PC-3 (cell line): ENCODE measurements at regions of chr1 and their contacts with region 1.

Region 1: DNA sequence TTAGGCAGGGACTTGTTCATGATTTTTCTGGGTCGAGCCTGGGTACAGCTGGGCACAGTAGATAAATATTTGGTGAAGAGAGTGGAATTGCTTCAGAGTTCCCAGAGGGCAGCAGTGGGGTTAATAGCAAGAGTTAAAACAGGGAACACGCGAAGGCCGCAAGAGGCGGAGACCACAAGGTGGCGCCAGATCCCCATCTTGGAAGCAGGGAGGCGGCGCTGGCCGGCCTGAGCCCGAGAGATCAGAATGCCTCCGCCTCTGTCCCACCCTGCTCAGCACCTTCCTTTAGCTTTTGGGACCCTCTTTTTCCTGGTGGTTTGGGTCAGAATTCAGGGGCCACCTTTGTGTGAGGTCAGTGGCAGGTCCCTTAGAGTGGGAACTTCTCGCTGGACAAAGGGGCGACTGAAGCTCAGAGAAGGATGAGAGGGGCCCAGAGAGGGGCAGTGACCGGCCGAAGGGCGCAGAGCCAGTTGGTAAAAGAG is 6.5 kb upstream of the PADI2 start:
- DNase-seq: peak; percentile 90
- ATAC-seq: peak; percentile 83
- H3K4me3 ChIP-seq: no peak overlapping the region
- H3K27ac ChIP-seq: no peak overlapping the region; the same call in 1 of the 2 replicates
- H3K4me1 ChIP-seq: peaks cover 18% of the 10 kb centered on the region
- H3K27me3 ChIP-seq: no peaks in the 10 kb centered on the region
- CTCF ChIP-seq: peak; percentile 93

Region 2: GRCh38 chr1:17168091-17168876 is 42.5 kb after region 1 on chr1:
- CTCF ChIA-PET with region 1: no interaction called
- POLR2A ChIA-PET with region 1: no interaction called
- intact Hi-C with region 1: loop called (anchors 1 kb)
- DNase-seq: peak; percentile 88
- ATAC-seq: peak; percentile 77
- H3K4me3 ChIP-seq: peak overlapping the region; percentile 46
- H3K27ac ChIP-seq: peak overlapping the region; percentile 96
- H3K4me1 ChIP-seq: peaks cover 27% of the 10 kb centered on the region
- H3K27me3 ChIP-seq: no peaks in the 10 kb centered on the region
- CTCF ChIP-seq: no peak

Region 3: DNA sequence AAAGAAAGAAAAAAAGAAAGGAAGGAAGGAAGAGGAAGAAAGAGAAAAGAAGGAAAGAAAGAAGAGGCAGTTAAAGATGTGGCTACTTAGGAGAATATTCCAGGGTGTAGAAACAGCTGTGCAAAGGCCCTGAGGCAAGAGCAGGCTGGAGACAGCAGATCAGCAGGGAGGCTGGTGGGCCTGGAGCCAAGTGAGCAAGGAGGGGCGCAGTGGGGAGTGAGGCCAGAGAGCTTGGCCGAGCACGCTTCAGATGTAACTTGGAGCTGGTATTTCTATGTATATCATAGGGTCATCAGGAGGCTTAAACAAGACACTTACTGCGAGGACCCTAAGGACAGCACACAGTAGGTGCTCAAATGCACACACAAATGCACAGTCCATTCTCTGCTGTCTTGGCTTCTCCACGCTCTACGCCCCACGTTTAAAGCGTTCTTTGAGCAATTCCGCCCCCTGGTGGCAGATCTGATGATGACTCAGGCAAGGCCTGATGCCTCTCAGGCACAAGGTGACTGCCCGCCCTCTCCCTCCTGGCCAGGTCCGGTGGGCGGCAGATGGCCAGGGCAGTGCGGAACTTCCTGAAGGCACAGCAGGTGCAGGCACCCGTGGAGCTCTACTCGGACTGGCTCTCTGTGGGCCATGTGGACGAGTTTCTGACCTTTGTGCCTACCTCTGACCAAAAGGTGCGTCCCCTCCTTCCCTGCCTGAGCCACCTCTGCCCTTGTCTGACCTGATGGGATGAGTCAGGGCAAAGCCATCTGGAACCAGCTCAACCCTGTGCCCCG is 111.2 kb after region 1 on chr1:
- CTCF ChIA-PET with region 1: interaction called, 8 read pairs
- POLR2A ChIA-PET with region 1: no interaction called
- intact Hi-C with region 1: loop called (anchors 1 kb)
- DNase-seq: peak; percentile 97
- ATAC-seq: peak; percentile 42
- H3K4me3 ChIP-seq: no peak overlapping the region
- H3K27ac ChIP-seq: peak overlapping the region; percentile 7; the same call in 1 of the 2 replicates
- H3K4me1 ChIP-seq: peaks cover 33% of the 10 kb centered on the region
- H3K27me3 ChIP-seq: no peaks in the 10 kb centered on the region
- CTCF ChIP-seq: peak; percentile 91

Region 4: DNA sequence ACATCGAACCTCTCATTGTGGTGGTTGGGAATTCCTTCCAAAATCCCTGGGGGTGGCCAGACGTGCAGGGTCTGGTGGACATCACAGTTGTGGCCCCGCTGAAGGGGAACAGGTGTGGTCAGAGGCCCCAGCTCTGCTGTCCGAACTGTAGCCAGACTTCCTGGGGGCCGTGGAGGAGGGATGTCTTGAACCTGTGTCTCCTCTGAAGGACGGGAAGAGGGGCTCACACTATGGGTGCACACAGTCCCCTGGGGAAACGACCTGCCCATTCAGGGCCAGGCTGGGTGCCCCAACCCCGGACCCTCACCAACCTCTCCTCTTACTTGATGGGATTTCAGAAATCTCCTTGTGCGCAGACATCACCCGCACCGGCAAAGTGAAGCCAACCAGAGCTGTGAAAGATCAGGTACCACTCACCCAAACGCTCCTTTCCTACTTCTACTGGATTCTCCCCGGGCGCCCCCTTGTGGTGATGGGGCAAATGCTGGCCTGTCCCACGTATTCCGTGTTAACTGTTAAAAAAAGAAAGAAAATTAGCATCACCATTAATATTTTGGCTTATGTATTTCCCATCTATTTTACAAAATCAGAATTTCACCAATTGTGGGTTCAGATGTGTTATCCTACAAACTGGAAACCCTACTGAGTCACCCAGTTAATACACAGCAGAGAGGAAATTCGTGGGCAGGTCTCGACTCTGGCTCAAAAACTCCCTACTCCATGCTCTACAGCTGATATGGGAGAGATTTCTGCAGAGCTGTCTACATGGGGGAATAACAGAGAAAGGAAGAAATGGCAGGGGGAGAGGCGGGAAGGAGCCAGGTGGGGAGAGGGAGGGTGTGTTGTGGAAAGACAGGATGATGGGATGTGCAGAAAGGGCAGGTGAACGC is 210.3 kb after region 1 on chr1:
- CTCF ChIA-PET with region 1: interaction called, 4 read pairs
- POLR2A ChIA-PET with region 1: no interaction called
- intact Hi-C with region 1: loop called (anchors 1 kb)
- DNase-seq: peak; percentile 79
- ATAC-seq: peak; percentile 94
- H3K4me3 ChIP-seq: no peak overlapping the region
- H3K27ac ChIP-seq: no peak overlapping the region
- H3K4me1 ChIP-seq: peaks cover 4% of the 10 kb centered on the region; the same call in 1 of the 2 replicates
- H3K27me3 ChIP-seq: no peaks in the 10 kb centered on the region
- CTCF ChIP-seq: peak; percentile 95